Activated CD8-positive, alpha-beta T cell treated with anti-CD3 and anti-CD28 coated beads, Interleukin-2, amount 10 ng/mL, durations not matched to agents 7 days and 5 days (primary cell): ENCODE measurements at regions of chr2 and their contacts with region 1.

Region 1: DNA sequence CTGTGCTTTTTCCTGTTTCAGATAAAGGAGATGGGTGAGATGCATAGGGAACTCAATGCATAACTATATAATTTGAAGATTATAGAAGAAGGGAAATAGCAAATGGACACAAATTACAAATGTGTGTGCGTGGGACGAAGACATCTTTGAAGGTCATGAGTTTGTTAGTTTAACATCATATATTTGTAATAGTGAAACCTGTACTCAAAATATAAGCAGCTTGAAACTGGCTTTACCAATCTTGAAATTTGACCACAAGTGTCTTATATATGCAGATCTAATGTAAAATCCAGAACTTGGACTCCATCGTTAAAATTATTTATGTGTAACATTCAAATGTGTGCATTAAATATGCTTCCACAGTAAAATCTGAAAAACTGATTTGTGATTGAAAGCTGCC is 16.4 kb upstream of the MSH2 start:
- DNase-seq: no peak
- ATAC-seq: no peak
- H3K4me3 Mint-ChIP-seq: no peak overlapping the region
- H3K27ac Mint-ChIP-seq: no peak overlapping the region
- H3K4me1 Mint-ChIP-seq: no peaks in the 10 kb centered on the region
- H3K27me3 Mint-ChIP-seq: peaks cover 14% of the 10 kb centered on the region

Region 2: DNA sequence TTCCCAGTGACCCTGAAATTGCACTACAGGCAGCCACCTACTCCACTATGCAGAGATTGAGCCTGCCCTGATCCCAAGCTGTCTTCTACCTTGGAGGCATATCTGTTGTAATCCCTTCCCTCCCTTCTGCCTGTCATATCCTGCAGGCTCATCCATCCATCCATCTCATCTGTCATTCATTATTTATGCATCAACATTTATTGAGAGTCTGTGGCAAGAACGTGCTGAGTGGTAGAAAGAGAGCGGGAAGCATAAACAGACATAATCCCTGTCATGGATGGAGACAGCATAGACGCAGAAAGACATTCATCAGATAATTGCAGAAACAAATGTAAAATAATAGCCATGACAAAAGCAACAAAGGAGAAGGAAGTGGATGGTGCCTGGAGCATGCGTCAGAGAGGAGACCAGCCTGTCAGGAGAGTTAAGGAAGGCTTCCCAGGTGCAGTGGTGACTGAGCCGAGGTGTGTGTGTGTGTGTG is 120.8 kb before region 1 on chr2:
- CTCF ChIA-PET with region 1: no interaction called
- POLR2A ChIA-PET with region 1: no interaction called
- DNase-seq: no peak
- ATAC-seq: no peak
- H3K4me3 Mint-ChIP-seq: no peak overlapping the region
- H3K27ac Mint-ChIP-seq: no peak overlapping the region
- H3K4me1 Mint-ChIP-seq: no peaks in the 10 kb centered on the region
- H3K27me3 Mint-ChIP-seq: peaks cover 2% of the 10 kb centered on the region

Region 3: GRCh38 chr2:47336259-47337238 is 50.0 kb before region 1 on chr2:
- CTCF ChIA-PET with region 1: interaction called, 46 read pairs
- POLR2A ChIA-PET with region 1: no interaction called
- DNase-seq: no peak
- ATAC-seq: no peak
- H3K4me3 Mint-ChIP-seq: no peak overlapping the region
- H3K27ac Mint-ChIP-seq: no peak overlapping the region
- H3K4me1 Mint-ChIP-seq: no peaks in the 10 kb centered on the region
- H3K27me3 Mint-ChIP-seq: peaks cover 18% of the 10 kb centered on the region

Region 4: DNA sequence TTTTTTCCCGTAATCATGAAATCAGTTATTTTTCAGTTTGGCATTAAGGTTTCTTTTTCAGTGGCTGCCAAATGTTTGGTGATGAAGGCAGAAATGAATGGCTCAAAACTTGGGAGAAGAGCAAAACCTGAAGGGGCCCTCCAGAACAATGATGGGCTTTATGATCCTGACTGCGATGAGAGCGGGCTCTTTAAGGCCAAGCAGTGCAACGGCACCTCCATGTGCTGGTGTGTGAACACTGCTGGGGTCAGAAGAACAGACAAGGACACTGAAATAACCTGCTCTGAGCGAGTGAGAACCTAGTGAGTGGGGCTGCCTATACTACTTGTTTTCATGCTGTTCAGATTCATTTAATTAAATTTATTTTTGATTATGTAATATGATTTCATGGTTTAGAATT is 12.8 kb before region 1 on chr2:
- CTCF ChIA-PET with region 1: interaction called, 11 read pairs
- POLR2A ChIA-PET with region 1: no interaction called
- DNase-seq: no peak
- ATAC-seq: no peak
- H3K4me3 Mint-ChIP-seq: no peak overlapping the region
- H3K27ac Mint-ChIP-seq: no peak overlapping the region
- H3K4me1 Mint-ChIP-seq: no peaks in the 10 kb centered on the region
- H3K27me3 Mint-ChIP-seq: peaks cover 18% of the 10 kb centered on the region

Region 5: GRCh38 chr2:47402805-47403608 is 16.5 kb after region 1 on chr2 and contains the start of gene MSH2:
- CTCF ChIA-PET with region 1: interaction called, 14 read pairs
- POLR2A ChIA-PET with region 1: no interaction called
- DNase-seq: peak; percentile 95
- ATAC-seq: peak; percentile 94
- H3K4me3 Mint-ChIP-seq: peak within 1 kb of the TSS; percentile 89
- H3K27ac Mint-ChIP-seq: peak within 1 kb of the TSS; percentile 92
- H3K4me1 Mint-ChIP-seq: peaks cover 34% of the 10 kb centered on the region
- H3K27me3 Mint-ChIP-seq: no peaks in the 10 kb centered on the region
- total RNA-seq, gene MSH2: 52.5 to 59.3 TPM